T-cell (primary cell): ENCODE measurements at regions of chr7 and their contacts with region 1.

Region 1: DNA sequence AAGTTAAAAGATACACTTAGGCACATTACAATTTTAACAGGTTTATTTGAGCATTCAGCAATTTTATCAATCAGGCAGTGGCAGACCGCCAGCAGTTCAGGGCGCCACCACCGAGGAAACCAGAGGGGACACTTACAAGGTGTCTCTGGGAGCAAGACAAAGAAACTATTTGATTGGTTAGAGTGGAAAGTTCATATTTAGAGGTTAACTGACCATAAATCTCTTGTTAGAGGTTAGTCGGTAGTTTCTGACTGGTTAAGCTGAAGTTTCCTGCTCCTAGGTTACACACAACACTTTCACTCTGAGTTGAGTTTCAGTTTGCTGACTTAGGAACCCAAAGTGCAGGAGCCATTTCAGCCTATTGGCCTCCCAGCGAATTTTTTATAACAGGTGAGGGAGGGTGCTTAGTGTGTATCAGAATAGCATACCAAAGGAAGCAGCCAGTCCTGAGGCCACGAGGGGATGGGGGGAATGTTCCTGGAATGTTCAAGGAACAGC is 10.8 kb upstream of the PVRIG start:
- DNase-seq: peak in 4 of 35 experiments; percentile 14 to 39 (median 23)
- ATAC-seq: peak; percentile 32 to 51 (median 42)
- H3K4me3 ChIP-seq: no peak overlapping the region
- H3K4me3 Mint-ChIP-seq: peak overlapping the region; percentile 28 to 71 (median 50)
- H3K27ac ChIP-seq: peak overlapping the region; percentile 11
- H3K27ac Mint-ChIP-seq: peak overlapping the region; percentile 57 to 87
- H3K4me1 ChIP-seq: peaks cover 22 to 40% of the 10 kb centered on the region in 2 experiments
- H3K4me1 Mint-ChIP-seq: peaks cover 43 to 50% (median 47%) of the 10 kb centered on the region in 3 donors
- H3K27me3 ChIP-seq: no peaks in the 10 kb centered on the region
- H3K27me3 Mint-ChIP-seq: no peaks in the 10 kb centered on the region

Region 2: DNA sequence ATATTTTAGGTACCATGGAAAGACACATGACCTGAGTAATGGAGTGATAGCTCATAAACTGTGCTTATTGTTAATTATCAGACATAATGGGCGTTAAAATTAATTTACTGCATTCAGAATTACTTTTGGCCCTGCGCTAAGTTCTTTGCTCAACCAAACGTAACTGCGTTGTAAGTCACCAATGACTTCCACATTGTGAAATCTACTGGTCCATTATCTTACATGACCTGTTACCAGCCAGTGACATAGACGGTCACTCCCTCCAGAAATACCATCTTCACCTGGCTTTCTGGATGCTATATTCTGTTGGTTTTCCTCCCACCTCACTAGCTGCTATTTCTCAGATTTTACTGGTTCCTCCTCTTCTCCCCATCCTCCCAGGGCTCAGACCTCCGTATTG is 490.1 kb after region 1 on chr7:
- CTCF ChIA-PET with region 1: interaction called in 1 of 2 experiments, 11 read pairs
- POLR2A ChIA-PET with region 1: no interaction called
- DNase-seq: no peak
- ATAC-seq: no peak
- H3K4me3 ChIP-seq: no peak overlapping the region
- H3K4me3 Mint-ChIP-seq: no peak overlapping the region
- H3K27ac ChIP-seq: no peak overlapping the region
- H3K27ac Mint-ChIP-seq: no peak overlapping the region
- H3K4me1 ChIP-seq: peaks cover 0 to 12% of the 10 kb centered on the region in 2 experiments
- H3K4me1 Mint-ChIP-seq: peaks cover 3 to 8% (median 7%) of the 10 kb centered on the region in 3 donors
- H3K27me3 ChIP-seq: peaks cover 0 to 7% of the 10 kb centered on the region in 2 experiments
- H3K27me3 Mint-ChIP-seq: peaks cover 0 to 2% of the 10 kb centered on the region in 2 donors